ENCODE measurements at regions of chr18 and their contacts with region 1.

Region 1: GRCh38 chr18:13611601-13612195 is 114.7 kb downstream of the FAM210A start:
- DNase-seq: peak; percentile 64 to 77
- ATAC-seq: peak; percentile 67 to 90 (median 74)
- H3K4me3 ChIP-seq: peak overlapping the region in 9 of 10 donors; percentile 17 to 54 (median 44)
- H3K27ac ChIP-seq: peak overlapping the region; percentile 68 to 88 (median 84)
- H3K4me1 ChIP-seq: peaks cover 17 to 75% (median 55%) of the 10 kb centered on the region in 9 donors
- H3K27me3 ChIP-seq: no peaks in the 10 kb centered on the region
- CTCF ChIP-seq: no peak

Region 2: GRCh38 chr18:13394801-13395200 is 216.9 kb before region 1 on chr18:
- intact Hi-C with region 1: no loop called
- DNase-seq: no peak
- ATAC-seq: no peak
- H3K4me3 ChIP-seq: no peak overlapping the region
- H3K27ac ChIP-seq: no peak overlapping the region
- H3K4me1 ChIP-seq: peaks cover 0 to 23% (median 6%) of the 10 kb centered on the region in 9 donors
- H3K27me3 ChIP-seq: no peaks in the 10 kb centered on the region
- CTCF ChIP-seq: no peak

Region 3: GRCh38 chr18:13549880-13550232 is 61.8 kb before region 1 on chr18:
- intact Hi-C with region 1: loop called in 2 of 10 experiments (anchors 1 to 5 kb)
- DNase-seq: no peak
- ATAC-seq: no peak
- H3K4me3 ChIP-seq: no peak overlapping the region
- H3K27ac ChIP-seq: peak overlapping the region in 8 of 10 donors; percentile 7 to 57 (median 51)
- H3K4me1 ChIP-seq: peaks cover 0 to 52% (median 29%) of the 10 kb centered on the region in 9 donors
- H3K27me3 ChIP-seq: no peaks in the 10 kb centered on the region
- CTCF ChIP-seq: no peak

Region 4: DNA sequence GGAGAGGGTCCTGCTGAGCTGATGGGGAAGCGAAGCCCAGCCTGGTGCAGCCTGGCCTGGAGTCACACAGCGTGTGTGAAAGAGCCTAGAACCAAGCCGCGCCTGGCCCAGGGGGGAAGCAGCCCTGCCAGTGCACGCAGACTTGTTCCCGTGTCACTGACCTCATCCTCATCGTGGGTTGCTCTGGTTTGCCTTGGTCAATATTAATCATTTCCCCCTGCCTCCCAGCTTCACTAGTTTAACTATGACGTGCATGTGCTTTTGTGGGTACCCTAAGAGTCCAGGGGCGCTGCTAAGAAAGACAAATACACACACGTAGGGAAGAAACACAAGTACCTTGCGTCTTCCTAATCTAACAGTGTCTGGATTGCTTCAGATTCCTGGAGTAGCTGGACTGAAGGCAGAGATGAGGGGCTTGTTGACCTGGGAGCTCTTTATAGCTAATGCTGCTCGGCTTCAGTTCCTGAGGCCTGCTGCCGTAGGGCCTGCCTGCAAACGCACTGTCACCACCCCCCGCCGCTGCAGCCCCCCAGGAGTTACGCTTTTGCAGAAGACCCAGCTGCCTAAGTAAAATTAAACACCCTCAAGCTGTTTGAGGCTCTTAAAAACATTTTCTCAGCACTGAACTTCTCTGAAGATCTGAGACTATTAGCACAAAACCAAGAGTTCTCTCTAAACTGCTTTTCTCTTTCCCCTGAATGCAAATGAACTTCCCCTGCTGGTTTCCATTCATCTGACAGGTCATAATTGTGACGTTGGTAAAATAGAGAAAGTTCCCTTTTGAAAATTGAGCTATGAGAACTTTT is 44.6 kb before region 1 on chr18:
- intact Hi-C with region 1: loop called in 5 of 10 experiments (anchors 1 to 5 kb)
- DNase-seq: peak; percentile 27 to 36
- ATAC-seq: peak in 3 of 8 donors; percentile 16 to 40 (median 23)
- H3K4me3 ChIP-seq: no peak overlapping the region
- H3K27ac ChIP-seq: peak overlapping the region in 7 of 10 donors; percentile 5 to 90 (median 78)
- H3K4me1 ChIP-seq: peaks cover 15 to 77% (median 37%) of the 10 kb centered on the region in 9 donors
- H3K27me3 ChIP-seq: no peaks in the 10 kb centered on the region
- CTCF ChIP-seq: no peak

Region 5: GRCh38 chr18:13585379-13586153 is 26.1 kb before region 1 on chr18:
- intact Hi-C with region 1: loop called in 1 of 10 experiments (anchors 2 kb)
- DNase-seq: no peak
- ATAC-seq: no peak
- H3K4me3 ChIP-seq: no peak overlapping the region
- H3K27ac ChIP-seq: peak overlapping the region in 4 of 10 donors; percentile 11 to 58 (median 35)
- H3K4me1 ChIP-seq: peaks cover 0 to 46% (median 21%) of the 10 kb centered on the region in 9 donors
- H3K27me3 ChIP-seq: no peaks in the 10 kb centered on the region
- CTCF ChIP-seq: no peak

Measured in heart right ventricle (tissue), 16 donors.